Uterus (tissue), 4 donors: ENCODE measurements at regions of chr6 and their contacts with region 1.

Region 1: DNA sequence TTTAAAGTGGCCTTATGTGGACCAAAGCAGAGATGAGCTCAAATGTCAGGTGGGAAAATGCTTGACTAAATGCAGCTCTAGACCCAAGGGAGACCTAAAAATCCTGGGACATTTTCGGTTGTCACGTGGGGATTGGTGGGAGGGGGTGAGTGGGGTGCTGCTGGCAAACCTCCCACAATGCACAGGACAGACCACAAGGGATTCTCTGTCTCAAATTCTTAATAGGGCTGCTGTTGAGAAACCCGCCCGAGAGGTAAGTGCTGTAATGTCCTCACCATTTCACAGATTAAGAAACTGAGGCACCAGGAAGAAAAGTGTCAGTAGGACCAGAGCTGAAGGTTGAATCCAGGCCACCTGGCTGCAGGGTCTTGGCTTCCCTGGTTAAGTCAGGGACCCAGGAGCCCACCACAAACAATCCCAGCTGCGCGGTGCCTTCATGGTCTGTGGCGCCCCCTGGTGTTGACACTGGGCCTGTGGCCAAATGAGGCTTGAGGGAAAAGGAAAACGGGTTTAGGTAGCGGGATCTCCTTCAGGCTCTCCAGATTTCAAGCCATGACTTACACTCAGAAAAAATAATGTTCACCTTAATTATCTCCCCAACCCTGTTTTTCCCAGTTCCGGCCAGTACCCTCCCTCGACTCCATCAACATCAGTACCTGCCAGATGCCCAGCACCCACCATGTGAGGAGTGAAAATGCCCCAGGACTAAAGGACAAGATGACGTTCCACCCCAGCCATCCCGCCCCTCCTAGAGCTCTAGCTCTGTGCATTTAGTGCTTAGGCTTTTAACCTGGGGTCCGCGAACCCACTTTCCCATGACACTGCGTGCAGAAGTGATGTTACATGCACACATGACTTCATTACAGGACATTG is 7.2 kb downstream of the HLA-G start:
- DNase-seq: no peak
- H3K4me3 ChIP-seq: no peak overlapping the region
- H3K27ac ChIP-seq: no peak overlapping the region
- H3K4me1 ChIP-seq: no peaks in the 10 kb centered on the region
- H3K27me3 ChIP-seq: peaks cover 0 to 2% of the 10 kb centered on the region in 2 donors
- CTCF ChIP-seq: peak; percentile 34 to 71 (median 58)
- POLR2A ChIP-seq: no peak

Region 2: DNA sequence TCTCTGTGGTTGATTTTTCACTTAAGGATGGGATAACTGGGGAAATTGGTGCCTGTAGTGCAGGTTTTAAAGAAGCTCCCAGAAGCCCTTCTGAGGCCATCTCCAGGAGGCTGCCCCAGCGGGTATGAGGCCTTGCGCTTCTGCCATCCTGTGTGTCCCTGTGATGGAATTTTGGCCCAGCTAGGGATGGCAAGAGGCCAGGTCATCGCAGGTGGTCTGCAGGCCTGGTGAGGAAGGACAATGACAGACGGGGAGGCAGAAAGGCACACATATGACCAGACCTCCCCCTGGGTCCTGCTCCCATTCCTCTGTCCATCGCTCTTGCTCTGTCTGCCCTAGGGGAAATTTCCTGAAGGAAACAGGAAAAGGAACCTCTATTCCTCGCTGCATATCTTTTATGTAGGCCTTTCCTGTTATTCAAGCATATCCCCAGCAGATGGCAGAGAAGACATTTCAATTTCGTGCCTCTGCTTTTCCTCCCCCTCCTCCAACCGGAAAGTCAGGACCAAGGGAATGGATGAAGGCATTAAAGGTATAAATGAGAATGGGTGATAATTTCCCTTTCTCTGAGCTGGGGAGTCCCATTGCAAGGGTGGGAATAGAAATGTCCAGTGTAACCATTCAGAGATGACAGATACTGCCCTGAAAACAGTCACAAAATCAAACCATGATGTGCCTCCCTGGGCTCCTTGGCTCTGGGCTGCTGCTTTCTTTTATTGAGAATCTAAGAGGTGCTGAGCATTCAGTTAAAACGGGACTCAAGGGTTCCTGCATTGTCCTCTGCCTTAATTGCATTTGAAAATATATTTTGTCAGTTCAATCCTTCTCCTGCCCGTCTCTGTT is 129.2 kb before region 1 on chr6:
- intact Hi-C with region 1: loop called (anchors 10 kb)
- DNase-seq: peak in 1 of 2 donors; percentile 40
- H3K4me3 ChIP-seq: no peak overlapping the region
- H3K27ac ChIP-seq: no peak overlapping the region
- H3K4me1 ChIP-seq: no peaks in the 10 kb centered on the region
- H3K27me3 ChIP-seq: no peaks in the 10 kb centered on the region
- CTCF ChIP-seq: peak; percentile 47 to 80 (median 66)
- POLR2A ChIP-seq: no peak